SK-MEL-5 (cell line): ENCODE measurements at regions of chr7 and their contacts with region 1.

Region 1: DNA sequence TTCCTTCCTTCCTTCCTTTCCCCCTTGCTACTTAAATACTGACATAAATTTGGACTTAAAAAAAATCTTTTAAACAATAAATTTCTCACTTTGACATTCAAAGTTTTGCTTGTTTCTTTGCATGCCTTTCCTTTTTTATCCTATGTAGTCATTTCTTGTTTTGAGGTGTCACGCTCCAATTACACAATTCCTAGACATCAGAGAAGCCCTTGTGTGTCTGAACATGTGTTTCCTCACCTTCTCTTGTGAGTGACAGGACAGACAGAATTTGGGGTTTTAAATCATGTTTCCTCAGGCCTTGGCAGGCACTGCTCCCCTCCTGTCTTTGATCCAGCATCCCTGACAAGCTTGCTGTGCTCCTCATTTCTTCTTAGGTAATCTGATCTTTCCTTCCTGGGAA is 91.3 kb downstream of the CYTH3 start:
- DNase-seq: peak; percentile 24

Region 2: GRCh38 chr7:6260291-6261187 is 79.4 kb after region 1 on chr7:
- in situ Hi-C with region 1: loop called (anchors 10 kb)
- DNase-seq: no peak